Endothelial cell of umbilical vein (primary cell): ENCODE measurements at regions of chr12 and their contacts with region 1.

Region 1: GRCh38 chr12:90940872-90941499 is 14.0 kb downstream of the CCER1 start:
- DNase-seq: peak; percentile 75
- H3K4me3 ChIP-seq: no peak overlapping the region
- H3K27ac ChIP-seq: no peak overlapping the region
- H3K4me1 ChIP-seq: peaks cover 18% of the 10 kb centered on the region
- H3K27me3 ChIP-seq: no peaks in the 10 kb centered on the region
- CTCF ChIP-seq: peak; percentile 38 to 47
- POLR2A ChIP-seq: no peak

Region 2: DNA sequence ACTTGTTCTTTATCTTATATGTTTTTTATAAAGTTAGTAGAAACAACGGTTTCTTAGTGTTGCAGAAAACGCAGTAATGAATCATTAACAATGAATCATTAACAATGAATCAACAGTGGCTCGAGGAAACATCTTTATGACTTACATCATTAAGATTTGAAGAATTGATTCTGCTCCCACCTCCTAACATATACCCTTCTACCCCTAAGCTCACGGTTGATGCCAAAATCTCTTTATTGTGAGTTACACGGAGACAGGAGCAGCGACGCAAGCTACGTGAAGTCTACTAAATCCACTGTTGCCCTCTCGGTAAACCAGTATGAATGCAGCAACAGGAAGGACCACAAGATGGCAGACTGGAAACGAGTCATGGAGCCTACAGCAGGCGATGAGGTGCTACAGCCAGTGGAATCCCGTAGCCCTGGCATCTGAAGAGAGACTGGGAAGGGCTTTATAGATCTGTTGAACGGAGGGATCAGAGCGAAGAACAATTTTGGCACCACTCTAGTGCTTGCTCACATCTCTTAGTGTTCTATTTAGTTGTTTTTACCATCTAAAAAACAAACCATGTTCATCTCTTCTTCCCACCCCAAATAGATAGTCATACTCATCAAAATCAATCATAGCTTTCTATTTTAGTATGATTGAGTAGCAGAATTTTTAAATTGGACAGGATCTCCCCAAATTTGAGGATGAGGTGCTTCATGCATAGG is 1921.4 kb before region 1 on chr12:
- CTCF ChIA-PET with region 1: interaction called, 3 read pairs
- POLR2A ChIA-PET with region 1: no interaction called
- dilution Hi-C with region 1: no loop called
- intact Hi-C with region 1: loop called (anchors 10 kb)
- DNase-seq: peak; percentile 95
- H3K4me3 ChIP-seq: peak overlapping the region in 2 of 3 experiments; percentile 18 to 20
- H3K27ac ChIP-seq: no peak overlapping the region
- H3K4me1 ChIP-seq: peaks cover 8% of the 10 kb centered on the region
- H3K27me3 ChIP-seq: no peaks in the 10 kb centered on the region
- CTCF ChIP-seq: peak; percentile 81 to 83
- POLR2A ChIP-seq: no peak

Region 3: DNA sequence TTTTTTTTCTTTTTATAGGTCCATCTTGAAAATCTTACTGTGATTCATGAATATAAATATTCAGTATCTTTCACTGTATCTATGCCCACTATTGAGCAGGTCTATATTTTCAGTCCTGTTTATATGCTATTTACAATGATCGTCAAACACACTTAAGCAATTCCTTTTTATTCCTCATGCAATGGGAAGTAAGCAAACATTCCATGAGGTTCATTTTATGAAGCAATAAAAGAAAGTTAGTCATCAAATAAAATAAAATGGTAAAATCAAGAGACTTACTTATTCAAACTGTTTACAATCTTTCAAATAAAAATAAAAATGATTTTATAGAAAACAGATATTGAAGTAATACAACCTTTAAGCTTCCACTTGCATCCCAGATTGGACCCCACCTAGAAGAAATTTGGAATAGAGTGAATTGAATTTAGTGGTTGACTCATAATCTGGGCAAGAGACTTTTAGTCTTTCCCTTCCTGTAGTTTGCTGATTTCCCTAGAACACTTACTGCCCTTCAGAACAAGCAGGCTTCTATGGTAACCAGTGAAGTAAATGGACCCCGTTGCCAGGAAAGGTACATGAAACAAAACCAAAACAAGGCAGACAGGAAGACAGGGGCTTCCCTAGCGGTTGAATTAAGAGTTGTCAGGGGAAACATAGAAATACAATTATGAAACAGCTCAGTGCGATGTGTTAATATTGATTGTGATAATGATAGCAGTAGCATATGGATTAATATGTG is 991.4 kb before region 1 on chr12:
- CTCF ChIA-PET with region 1: interaction called, 5 read pairs
- POLR2A ChIA-PET with region 1: no interaction called
- dilution Hi-C with region 1: no loop called
- intact Hi-C with region 1: loop called (anchors 5 kb)
- DNase-seq: peak; percentile 98
- H3K4me3 ChIP-seq: no peak overlapping the region
- H3K27ac ChIP-seq: peak overlapping the region; percentile 99
- H3K4me1 ChIP-seq: peaks cover 33% of the 10 kb centered on the region
- H3K27me3 ChIP-seq: no peaks in the 10 kb centered on the region
- CTCF ChIP-seq: peak; percentile 21 to 36
- POLR2A ChIP-seq: no peak

Region 4: GRCh38 chr12:90543374-90543773 is 397.6 kb before region 1 on chr12:
- CTCF ChIA-PET with region 1: interaction called, 4 read pairs
- POLR2A ChIA-PET with region 1: no interaction called
- dilution Hi-C with region 1: no loop called
- intact Hi-C with region 1: loop called (anchors 5 kb)
- DNase-seq: peak; percentile 93
- H3K4me3 ChIP-seq: no peak overlapping the region
- H3K27ac ChIP-seq: peak overlapping the region; percentile 97
- H3K4me1 ChIP-seq: peaks cover 18% of the 10 kb centered on the region
- H3K27me3 ChIP-seq: no peaks in the 10 kb centered on the region
- CTCF ChIP-seq: no peak
- POLR2A ChIP-seq: peak; percentile 55

Region 5: DNA sequence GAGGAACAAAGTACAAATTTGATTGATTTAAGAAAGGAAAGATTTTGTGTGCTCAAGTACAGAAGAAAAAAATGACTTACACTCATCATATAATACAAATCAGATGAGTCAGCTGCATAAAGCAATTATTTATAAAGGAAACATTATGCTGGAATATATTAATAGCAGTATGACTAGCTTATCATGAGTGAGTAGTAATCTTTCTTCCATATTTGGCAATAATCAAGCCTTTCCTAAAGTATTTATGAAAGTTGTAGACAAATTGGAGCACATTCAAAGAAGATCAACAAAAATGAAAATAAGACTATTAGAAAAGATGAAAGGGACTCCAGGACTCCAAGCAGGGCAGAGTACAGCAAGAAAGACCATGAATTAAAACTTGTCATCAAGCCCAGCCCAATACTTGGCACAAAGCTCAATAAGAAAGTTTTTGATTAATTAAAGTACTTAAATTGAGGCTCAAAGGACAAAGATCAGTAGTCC is 18.8 kb before region 1 on chr12:
- CTCF ChIA-PET with region 1: interaction called, 14 read pairs
- POLR2A ChIA-PET with region 1: no interaction called
- dilution Hi-C with region 1: no loop called
- intact Hi-C with region 1: no loop called
- DNase-seq: peak; percentile 77
- H3K4me3 ChIP-seq: no peak overlapping the region
- H3K27ac ChIP-seq: peak overlapping the region; percentile 76
- H3K4me1 ChIP-seq: peaks cover 10% of the 10 kb centered on the region
- H3K27me3 ChIP-seq: no peaks in the 10 kb centered on the region
- CTCF ChIP-seq: no peak
- POLR2A ChIP-seq: no peak

Region 6: GRCh38 chr12:91109148-91109564 is 168.2 kb after region 1 on chr12:
- CTCF ChIA-PET with region 1: interaction called, 24 read pairs
- POLR2A ChIA-PET with region 1: no interaction called
- dilution Hi-C with region 1: no loop called
- intact Hi-C with region 1: no loop called
- DNase-seq: peak; percentile 74
- H3K4me3 ChIP-seq: no peak overlapping the region
- H3K27ac ChIP-seq: no peak overlapping the region
- H3K4me1 ChIP-seq: peaks cover 2% of the 10 kb centered on the region
- H3K27me3 ChIP-seq: no peaks in the 10 kb centered on the region
- CTCF ChIP-seq: peak; percentile 67 to 69
- POLR2A ChIP-seq: no peak

Region 7: GRCh38 chr12:91355150-91356006 is 414.4 kb after region 1 on chr12:
- CTCF ChIA-PET with region 1: interaction called, 94 read pairs
- POLR2A ChIA-PET with region 1: no interaction called
- dilution Hi-C with region 1: no loop called
- intact Hi-C with region 1: no loop called
- DNase-seq: peak; percentile 75
- H3K4me3 ChIP-seq: no peak overlapping the region
- H3K27ac ChIP-seq: no peak overlapping the region
- H3K4me1 ChIP-seq: peaks cover 4% of the 10 kb centered on the region
- H3K27me3 ChIP-seq: no peaks in the 10 kb centered on the region
- CTCF ChIP-seq: peak; percentile 83 to 87
- POLR2A ChIP-seq: no peak